ENCODE measurements at regions of chr9 and their contacts with region 1.

Region 1: DNA sequence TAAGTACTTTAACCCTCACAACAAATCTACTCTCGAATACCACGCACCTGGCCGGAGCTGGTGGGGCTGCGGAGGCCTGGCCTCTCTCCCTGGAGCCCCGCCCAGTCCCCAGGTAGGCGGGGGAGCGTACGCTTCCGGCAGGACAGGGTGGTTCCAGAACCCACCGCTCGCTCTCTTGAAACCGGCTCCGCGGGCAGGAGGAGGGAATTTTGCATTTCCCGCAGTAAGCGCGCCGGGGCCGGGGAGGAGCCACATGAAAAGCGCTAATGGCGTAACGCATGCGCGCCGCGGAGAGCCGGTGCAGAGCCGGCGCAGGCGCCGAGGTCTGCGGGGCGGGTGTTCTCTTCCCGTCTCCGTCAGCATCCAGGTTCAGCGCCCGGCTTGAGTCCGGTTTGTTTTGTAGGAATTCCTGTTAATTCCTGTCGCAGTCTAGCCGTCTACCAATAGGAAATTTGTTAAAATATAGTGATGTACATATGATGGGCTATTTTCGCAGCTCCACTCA is 20.8 kb downstream of the CAVIN4 start:
- DNase-seq: peak; percentile 74
- H3K4me3 ChIP-seq: peak overlapping the region; percentile 60
- H3K27ac ChIP-seq: no peak overlapping the region
- H3K4me1 ChIP-seq: peaks cover 13% of the 10 kb centered on the region
- CTCF ChIP-seq: no peak

Region 2: DNA sequence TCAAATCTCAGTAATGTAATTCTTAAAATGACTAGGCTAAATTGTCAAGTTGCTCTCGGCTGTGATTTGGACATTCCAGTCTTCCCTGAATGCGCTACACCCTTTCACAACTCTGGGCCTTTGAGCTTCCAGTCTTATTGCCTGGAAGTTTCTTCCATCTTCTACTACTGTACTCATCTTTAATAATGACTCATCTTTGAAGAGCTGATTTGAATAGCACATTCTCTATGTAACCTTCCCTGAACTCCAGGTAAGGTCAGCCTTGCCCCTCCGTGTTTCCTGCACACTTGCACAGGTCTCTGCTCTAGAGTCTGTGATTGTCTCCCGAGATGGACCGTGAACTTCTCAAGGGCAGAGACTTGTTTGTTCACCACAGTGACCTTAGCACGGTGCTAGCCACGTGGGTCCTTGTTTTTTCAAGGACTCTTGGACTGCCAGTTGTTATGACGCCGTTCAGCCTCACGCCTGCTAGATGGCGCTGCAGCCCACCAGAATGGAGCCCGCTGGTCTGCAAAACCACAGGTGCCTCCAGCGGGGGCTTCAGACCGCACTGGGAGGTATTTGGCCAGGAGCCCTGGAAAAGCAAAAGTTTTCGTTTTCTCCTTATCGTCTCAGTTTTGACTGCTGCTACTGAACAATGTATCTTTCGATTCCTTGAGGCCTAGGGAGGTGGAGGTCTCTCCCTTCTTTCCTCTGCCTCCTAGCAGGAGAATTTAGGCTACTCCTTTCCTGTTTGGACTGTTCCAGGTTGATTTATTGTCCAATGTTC is 1332.3 kb before region 1 on chr9:
- CTCF ChIA-PET with region 1: no interaction called
- POLR2A ChIA-PET with region 1: no interaction called
- intact Hi-C with region 1: loop called (anchors 5 kb)
- DNase-seq: peak; percentile 77
- H3K4me3 ChIP-seq: no peak overlapping the region
- H3K27ac ChIP-seq: no peak overlapping the region
- H3K4me1 ChIP-seq: peaks cover 4% of the 10 kb centered on the region
- CTCF ChIP-seq: peak; percentile 94

Region 3: GRCh38 chr9:100028201-100028784 is 570.4 kb before region 1 on chr9:
- CTCF ChIA-PET with region 1: no interaction called
- POLR2A ChIA-PET with region 1: no interaction called
- intact Hi-C with region 1: loop called (anchors 10 kb)
- DNase-seq: peak; percentile 83
- H3K4me3 ChIP-seq: no peak overlapping the region
- H3K27ac ChIP-seq: no peak overlapping the region
- H3K4me1 ChIP-seq: peaks cover 24% of the 10 kb centered on the region
- CTCF ChIP-seq: peak; percentile 99

Region 4: DNA sequence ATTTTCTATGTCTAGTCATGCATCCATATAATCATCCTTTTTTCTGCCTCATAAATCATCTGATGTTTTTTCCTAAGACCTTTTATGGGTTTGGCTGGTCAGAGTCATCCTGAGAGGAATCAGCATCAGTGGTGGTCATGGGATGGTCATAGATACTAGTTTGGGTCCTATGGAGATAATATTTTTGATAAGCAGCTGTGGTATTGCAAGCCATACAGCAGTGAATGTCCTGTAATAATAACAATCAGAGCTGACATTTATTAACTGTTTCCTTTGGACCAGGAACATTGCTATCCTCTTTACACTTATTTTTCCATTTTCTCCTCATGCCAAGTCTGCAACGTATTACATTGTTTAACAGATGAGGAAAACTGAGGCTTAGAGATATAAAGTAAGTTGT is 329.0 kb before region 1 on chr9:
- CTCF ChIA-PET with region 1: no interaction called
- POLR2A ChIA-PET with region 1: no interaction called
- intact Hi-C with region 1: no loop called
- DNase-seq: no peak
- H3K4me3 ChIP-seq: no peak overlapping the region
- H3K27ac ChIP-seq: no peak overlapping the region
- H3K4me1 ChIP-seq: no peaks in the 10 kb centered on the region
- CTCF ChIP-seq: no peak

Region 5: DNA sequence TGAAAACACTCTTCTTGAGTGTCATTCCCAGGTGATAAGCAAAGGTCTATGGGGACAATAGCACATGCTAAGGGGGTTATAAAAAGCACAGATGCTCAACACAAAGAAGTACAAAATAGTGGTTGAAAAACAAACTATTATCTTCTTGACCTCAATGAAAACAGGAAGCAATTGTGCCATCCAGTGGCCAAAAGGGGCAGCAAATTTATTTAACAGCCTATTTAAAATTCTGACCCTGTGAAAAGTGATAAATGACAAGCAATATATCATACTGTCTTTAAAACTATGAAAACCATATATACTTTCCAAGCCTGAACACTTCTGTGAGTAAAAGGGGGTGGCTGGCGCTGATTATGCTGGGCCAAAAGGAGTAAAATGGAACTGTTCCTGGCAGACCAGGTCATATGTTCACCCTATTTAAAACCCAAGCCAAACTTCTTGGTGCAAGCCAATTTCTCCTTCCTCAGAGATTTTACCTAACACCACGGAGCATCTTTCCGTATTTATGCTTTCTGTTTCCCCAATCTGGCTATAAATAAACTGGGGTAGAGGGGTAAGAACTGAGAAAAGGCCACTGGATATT is 275.6 kb before region 1 on chr9:
- CTCF ChIA-PET with region 1: no interaction called
- POLR2A ChIA-PET with region 1: interaction called, 3 read pairs
- intact Hi-C with region 1: loop called (anchors 2 kb)
- DNase-seq: peak; percentile 55
- H3K4me3 ChIP-seq: no peak overlapping the region
- H3K27ac ChIP-seq: no peak overlapping the region
- H3K4me1 ChIP-seq: no peaks in the 10 kb centered on the region
- CTCF ChIP-seq: peak; percentile 89

Region 6: DNA sequence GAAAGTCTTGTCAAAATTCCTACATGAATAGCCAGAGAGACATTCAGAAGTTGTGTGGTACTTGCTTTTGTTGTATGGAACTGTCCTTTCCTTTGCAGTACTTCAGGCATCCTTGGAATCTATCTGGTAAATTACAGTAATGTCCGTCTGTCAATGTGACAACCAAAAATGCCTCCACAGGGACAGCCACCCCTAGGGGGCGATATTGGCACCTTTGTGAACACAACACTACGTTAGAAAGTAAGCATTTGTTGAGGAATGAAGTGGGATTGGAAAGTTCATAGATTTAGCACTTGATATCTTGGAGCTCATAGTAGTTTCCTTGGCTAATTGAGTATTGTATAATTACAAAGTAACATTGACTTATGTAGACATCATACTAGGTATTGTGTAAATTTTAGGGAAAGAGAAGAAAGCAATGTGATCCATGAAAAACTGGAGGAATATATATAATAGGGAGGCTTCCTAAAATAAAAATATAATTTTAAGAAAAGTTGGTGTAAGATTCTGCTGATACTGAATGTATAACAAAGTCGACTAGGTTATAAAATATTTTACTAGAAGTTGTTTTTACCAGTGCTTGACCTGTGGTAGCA is 93.0 kb before region 1 on chr9:
- CTCF ChIA-PET with region 1: no interaction called
- POLR2A ChIA-PET with region 1: no interaction called
- intact Hi-C with region 1: loop called (anchors 5 kb)
- DNase-seq: peak; percentile 75
- H3K4me3 ChIP-seq: no peak overlapping the region
- H3K27ac ChIP-seq: no peak overlapping the region
- H3K4me1 ChIP-seq: peaks cover 17% of the 10 kb centered on the region
- CTCF ChIP-seq: peak; percentile 99

Measured in OCI-LY7 (cell line).